ENCODE measurements at regions of chr12 and their contacts with region 1.

Region 1: GRCh38 chr12:50074936-50075807 is 10.0 kb upstream of the SMARCD1 start:
- DNase-seq: peak; percentile 82 to 89 (median 82)
- ATAC-seq: peak; percentile 94
- H3K4me3 ChIP-seq: no peak overlapping the region
- H3K27ac ChIP-seq: no peak overlapping the region
- H3K4me1 ChIP-seq: peaks cover 23 to 24% of the 10 kb centered on the region in 2 experiments; a peak in 4 of 5 replicates
- H3K27me3 ChIP-seq: no peaks in the 10 kb centered on the region
- CTCF ChIP-seq: peak; percentile 90 to 95 (median 94)
- EP300 ChIP-seq: no peak
- POLR2A ChIP-seq: no peak
- RAD21 ChIP-seq: peak; percentile 91 to 97

Region 2: DNA sequence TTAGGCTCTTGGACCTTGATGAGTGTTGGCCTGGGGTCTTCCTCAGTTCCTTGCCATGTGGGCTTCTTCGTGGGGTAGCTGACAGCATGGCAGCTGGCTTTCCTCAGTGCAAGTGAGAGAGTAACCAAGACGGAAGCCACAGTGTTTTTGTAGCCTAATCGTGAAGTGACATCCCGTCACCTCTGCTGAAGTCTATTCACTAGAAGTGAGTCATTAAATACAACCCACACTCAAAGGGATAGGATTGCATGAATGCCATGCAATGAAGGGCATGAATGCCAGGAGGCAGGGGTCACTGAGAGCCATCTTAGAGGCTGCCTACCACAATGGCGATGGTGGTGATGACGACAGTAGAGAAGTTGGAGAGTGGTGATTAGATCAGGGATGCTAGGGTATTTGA is 31.3 kb before region 1 on chr12:
- CTCF ChIA-PET with region 1: interaction called, 22 read pairs
- POLR2A ChIA-PET with region 1: interaction called, 3 read pairs
- in situ Hi-C with region 1: no loop called
- intact Hi-C with region 1: loop called (anchors 1 kb)
- DNase-seq: no peak
- ATAC-seq: no peak
- H3K4me3 ChIP-seq: no peak overlapping the region
- H3K27ac ChIP-seq: no peak overlapping the region
- H3K4me1 ChIP-seq: peaks cover 35 to 38% of the 10 kb centered on the region in 2 experiments
- H3K27me3 ChIP-seq: no peaks in the 10 kb centered on the region
- CTCF ChIP-seq: no peak
- EP300 ChIP-seq: no peak
- POLR2A ChIP-seq: no peak
- RAD21 ChIP-seq: no peak

Region 3: GRCh38 chr12:50174971-50175715 is 100.0 kb after region 1 on chr12:
- CTCF ChIA-PET with region 1: interaction called, 66 read pairs
- POLR2A ChIA-PET with region 1: no interaction called
- in situ Hi-C with region 1: loop called (anchors 5 kb)
- intact Hi-C with region 1: loop called (anchors 1 kb)
- DNase-seq: peak; percentile 51 to 82 (median 54)
- ATAC-seq: peak; percentile 64
- H3K4me3 ChIP-seq: no peak overlapping the region
- H3K27ac ChIP-seq: no peak overlapping the region
- H3K4me1 ChIP-seq: no peaks in the 10 kb centered on the region
- H3K27me3 ChIP-seq: no peaks in the 10 kb centered on the region
- CTCF ChIP-seq: peak; percentile 52 to 87 (median 54); a peak in 5 of 6 replicates
- EP300 ChIP-seq: no peak
- POLR2A ChIP-seq: no peak
- RAD21 ChIP-seq: peak; percentile 92 to 94

Measured in K562 (cell line).